HEK293 (cell line): ENCODE measurements at regions of chr11 and their contacts with region 1.

Region 1: DNA sequence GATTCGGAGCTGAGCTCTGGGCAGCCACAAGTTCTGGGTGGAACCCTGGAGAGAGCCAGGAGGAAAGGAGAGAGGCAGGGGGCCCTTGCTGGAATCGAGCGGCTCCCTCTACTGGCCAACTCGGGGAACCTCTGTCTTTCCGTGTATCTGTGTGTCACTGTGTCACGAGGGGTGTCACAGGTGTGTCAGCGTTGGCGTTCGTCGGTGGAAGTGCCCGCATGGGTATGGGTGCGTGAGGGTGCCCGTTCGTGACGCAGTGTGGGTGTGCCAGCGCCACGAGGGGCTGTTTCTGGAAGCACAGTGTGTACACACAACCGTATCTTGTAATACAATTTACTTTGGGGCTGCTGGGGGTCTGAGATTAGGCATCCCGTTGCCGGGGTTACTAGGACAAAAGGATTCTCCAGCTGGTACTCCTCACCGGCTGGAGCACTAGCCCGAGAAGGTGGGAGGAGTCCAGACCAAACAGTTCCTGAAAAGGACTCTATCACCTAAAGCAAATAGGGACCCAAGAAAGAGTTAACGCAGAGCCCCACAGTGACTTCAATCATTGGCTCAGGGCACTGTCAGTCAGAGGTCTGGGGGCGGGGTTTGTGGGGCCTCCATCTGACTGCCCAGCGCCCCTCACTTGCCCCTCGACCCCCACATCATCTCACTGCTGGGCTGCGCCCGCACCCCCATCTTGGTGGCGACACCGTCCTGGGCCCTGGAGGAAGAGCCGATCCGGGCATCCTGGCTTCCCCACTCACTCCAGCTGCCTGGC is 2.6 kb upstream of the BCL9L start:
- H3K4me3 ChIP-seq: peak overlapping the region; percentile 48
- H3K27ac ChIP-seq: peak overlapping the region; percentile 64
- H3K4me1 ChIP-seq: peaks cover 3% of the 10 kb centered on the region; the same call in 1 of the 2 replicates
- CTCF ChIP-seq: peak; percentile 93

Region 2: GRCh38 chr11:118602331-118602730 is 326.0 kb before region 1 on chr11:
- CTCF ChIA-PET with region 1: no interaction called
- POLR2A ChIA-PET with region 1: no interaction called
- H3K4me3 ChIP-seq: no peak overlapping the region
- H3K27ac ChIP-seq: no peak overlapping the region
- H3K4me1 ChIP-seq: no peaks in the 10 kb centered on the region
- CTCF ChIP-seq: no peak

Region 3: GRCh38 chr11:118705111-118705741 is 223.1 kb before region 1 on chr11:
- CTCF ChIA-PET with region 1: no interaction called
- POLR2A ChIA-PET with region 1: no interaction called
- H3K4me3 ChIP-seq: no peak overlapping the region
- H3K27ac ChIP-seq: no peak overlapping the region
- H3K4me1 ChIP-seq: no peaks in the 10 kb centered on the region
- CTCF ChIP-seq: no peak

Region 4: DNA sequence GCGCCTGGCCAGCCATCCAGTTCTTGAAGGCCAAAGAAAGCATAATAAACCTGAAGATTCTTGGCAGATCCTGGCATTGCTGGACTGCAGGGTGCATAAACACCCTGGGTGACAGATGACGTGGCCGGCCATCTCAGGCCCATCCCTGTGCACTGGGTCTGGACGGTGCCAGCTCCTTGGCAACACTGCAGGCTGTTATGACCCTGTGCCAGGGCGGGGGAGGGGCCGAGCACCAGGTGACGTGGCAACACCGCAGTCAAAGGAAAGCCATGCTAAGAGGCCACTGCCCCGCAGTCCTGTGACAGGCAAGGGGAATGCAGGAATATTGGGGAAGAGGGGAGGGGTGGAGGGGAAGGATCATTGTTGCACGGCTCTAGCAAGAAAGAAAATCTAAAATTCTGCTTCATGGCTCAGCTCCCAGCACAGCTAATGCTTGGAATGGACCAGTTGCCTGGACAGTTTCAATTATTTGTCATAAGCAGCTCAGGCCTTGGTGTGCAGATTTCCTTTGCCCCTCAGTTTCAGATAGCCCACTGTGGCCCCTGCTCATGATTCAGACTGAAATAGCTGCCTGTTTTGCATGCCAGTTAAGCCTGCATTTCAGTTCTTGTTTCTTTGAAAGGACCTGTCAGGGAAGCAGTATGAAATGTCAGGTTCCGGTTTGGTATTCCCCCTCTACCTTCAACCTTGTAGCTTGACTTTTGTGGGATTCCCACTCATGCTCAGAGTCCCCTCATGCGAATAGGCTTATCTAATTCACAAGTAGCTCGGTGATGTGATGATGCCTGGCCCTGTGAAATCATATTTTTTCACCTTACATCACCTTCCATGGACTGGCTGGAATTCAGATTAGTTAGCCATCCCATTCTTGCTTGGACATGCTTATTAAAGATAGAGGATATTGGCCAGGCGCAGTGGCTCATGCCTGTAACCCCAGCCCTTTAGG is 107.6 kb before region 1 on chr11:
- CTCF ChIA-PET with region 1: no interaction called
- POLR2A ChIA-PET with region 1: no interaction called
- H3K4me3 ChIP-seq: no peak overlapping the region
- H3K27ac ChIP-seq: no peak overlapping the region
- H3K4me1 ChIP-seq: no peaks in the 10 kb centered on the region
- CTCF ChIP-seq: no peak

Region 5: DNA sequence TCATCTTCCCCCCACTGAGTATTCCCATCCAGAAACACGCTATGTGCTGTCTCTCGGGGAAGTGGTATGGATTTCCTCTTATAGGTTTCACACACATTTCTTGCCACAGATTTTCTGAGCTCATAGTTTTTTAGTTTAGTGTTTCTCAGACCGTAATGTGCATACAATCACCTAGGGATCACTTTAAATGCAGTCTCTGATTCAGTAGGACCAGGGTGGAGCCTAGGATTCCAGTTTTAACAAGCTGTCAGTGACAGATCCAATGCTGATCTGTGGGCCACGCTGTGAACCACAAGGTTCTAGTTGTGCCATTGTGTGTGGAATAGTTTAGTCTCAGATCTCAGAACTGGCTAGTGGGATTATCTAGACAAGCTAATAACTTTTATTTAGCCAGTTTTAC is 68.3 kb before region 1 on chr11:
- CTCF ChIA-PET with region 1: no interaction called
- POLR2A ChIA-PET with region 1: no interaction called
- H3K4me3 ChIP-seq: no peak overlapping the region
- H3K27ac ChIP-seq: no peak overlapping the region
- H3K4me1 ChIP-seq: no peaks in the 10 kb centered on the region
- CTCF ChIP-seq: no peak

Region 6: DNA sequence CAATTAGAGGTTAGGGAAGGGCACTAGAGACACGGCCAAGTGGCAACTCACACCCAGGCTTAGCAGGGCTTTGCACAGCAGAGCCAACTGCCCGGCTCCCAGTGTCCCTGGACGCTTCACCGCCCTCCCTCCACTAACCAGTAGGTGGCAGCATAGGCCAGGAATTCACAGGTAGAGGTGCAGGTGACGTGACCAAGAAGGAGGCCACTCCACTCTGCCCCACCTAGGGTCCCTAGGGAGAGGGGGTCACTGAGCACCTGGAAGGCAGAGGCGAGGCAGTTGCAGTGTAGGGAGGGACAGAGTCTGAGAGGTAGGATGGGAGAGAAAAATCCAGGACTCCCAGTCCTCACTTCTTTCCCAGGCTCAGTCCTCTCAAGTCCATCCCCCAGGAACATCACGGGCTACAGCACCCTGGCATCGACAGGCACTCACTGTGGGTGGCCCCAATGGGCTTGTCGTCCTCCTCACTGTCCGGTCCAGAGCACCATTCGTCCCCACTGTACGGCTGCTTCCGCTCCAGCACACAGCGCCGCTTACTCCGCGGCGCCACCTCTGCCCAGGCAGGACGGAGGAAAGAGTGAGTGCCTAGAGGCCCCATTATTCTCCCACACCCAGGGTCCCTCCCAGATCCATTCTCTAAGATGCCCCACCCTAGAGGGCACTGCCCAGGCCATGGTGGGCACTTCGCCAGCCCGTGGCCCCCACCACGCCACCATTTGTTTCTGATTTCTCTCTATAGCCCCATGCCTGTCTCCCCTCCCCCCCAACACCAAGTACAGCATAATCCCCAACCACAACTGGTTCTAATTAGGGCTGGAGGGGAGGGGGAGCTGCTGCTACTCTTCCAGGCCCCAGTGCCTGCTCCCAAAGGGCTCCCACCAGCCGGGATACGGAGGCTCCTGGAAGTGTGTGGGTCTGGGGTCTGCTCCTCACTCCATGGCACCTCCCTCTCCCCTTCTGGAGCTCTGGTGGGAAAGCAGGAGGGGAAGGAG is 20.9 kb before region 1 on chr11:
- CTCF ChIA-PET with region 1: interaction called, 196 read pairs
- POLR2A ChIA-PET with region 1: interaction called, 96 read pairs
- H3K4me3 ChIP-seq: no peak overlapping the region
- H3K27ac ChIP-seq: no peak overlapping the region
- H3K4me1 ChIP-seq: peaks cover 14% of the 10 kb centered on the region
- CTCF ChIP-seq: peak; percentile 92

Region 7: GRCh38 chr11:118917481-118918127 is 10.7 kb before region 1 on chr11:
- CTCF ChIA-PET with region 1: interaction called, 196 read pairs
- POLR2A ChIA-PET with region 1: interaction called, 96 read pairs
- H3K4me3 ChIP-seq: no peak overlapping the region
- H3K27ac ChIP-seq: peak overlapping the region; percentile 65; the same call in 1 of the 2 replicates
- H3K4me1 ChIP-seq: peaks cover 21% of the 10 kb centered on the region
- CTCF ChIP-seq: no peak

Region 8: DNA sequence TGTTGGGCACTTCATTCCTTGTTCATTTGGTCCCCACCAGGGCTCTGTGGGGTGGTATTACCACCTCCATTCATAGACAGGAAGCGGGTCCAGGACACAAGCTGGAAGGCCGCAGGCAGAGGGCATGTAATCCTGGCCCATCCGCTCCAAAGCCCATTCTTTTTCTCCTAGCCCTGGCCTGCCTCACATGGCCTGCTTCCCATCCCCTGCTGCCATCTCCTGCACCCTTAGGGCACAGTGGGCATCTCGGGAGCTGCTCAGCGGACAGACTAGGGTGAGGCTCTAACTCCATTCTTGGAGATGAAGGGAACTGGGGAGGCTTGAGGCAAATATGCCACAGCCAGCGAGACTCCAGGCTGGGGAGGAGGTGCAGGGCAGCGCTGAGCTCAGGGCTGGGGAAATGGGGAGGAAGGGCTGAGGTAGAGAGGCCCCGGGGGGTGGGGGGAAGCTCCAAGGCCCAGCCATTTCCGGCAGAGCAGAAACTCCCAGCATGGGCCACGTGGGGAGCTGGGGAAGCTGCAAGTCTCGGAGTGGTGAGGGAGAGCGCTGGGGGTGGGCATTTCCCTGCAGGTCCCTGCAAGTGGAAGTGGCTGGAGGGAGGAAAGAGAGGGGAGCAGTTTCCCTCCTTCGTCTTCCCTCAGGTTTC is 11.8 kb after region 1 on chr11:
- CTCF ChIA-PET with region 1: interaction called, 18 read pairs
- POLR2A ChIA-PET with region 1: interaction called, 4 read pairs
- H3K4me3 ChIP-seq: no peak overlapping the region
- H3K27ac ChIP-seq: no peak overlapping the region
- H3K4me1 ChIP-seq: no peaks in the 10 kb centered on the region
- CTCF ChIP-seq: no peak

Region 9: DNA sequence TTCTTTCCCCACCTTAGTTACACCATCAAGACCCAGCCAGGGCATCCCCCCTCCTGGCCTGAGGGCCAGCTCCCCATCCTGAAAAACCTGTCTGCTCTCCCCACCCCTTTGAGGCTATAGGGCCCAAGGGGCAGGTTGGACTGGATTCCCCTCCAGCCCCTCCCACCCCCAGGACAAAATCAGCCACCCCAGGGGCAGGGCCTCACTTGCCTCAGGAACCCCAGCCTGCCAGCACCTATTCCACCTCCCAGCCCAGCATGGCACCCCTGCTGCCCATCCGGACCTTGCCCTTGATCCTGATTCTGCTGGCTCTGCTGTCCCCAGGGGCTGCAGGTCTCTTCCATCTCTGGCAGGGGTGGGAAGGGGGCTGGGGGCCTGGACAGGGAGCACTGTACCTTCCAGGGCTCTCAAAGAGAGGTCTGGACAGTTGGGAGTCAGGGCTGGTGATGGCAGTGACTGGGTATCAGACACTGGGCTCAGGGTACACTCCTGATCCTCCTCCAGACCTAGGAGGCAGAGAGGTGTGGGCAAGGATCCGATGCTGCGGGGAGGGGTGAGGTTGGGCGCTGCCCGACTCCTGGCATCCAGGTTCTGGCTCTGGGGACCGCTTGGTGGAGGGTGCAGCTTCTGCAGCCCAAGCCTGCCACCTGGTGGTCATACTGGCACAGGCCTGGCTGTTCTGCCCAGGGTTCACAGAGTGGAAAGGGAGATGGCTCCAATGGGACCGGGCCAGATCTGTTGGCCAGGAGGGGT is 28.0 kb after region 1 on chr11 and contains the start of gene UPK2:
- CTCF ChIA-PET with region 1: interaction called, 18 read pairs
- POLR2A ChIA-PET with region 1: no interaction called
- H3K4me3 ChIP-seq: no peak within 1 kb of the TSS
- H3K27ac ChIP-seq: no peak within 1 kb of the TSS
- H3K4me1 ChIP-seq: no peaks in the 10 kb centered on the region
- CTCF ChIP-seq: peak; percentile 90